ENCODE measurements at regions of chr19 and their contacts with region 1.

Region 1: GRCh38 chr19:1081251-1081921 is 13.8 kb downstream of the POLR2E start:
- DNase-seq: no peak
- H3K4me3 Mint-ChIP-seq: no peak overlapping the region
- H3K27ac Mint-ChIP-seq: peak overlapping the region; percentile 37
- H3K4me1 Mint-ChIP-seq: peaks cover 27% of the 10 kb centered on the region
- H3K27me3 Mint-ChIP-seq: no peaks in the 10 kb centered on the region

Region 2: DNA sequence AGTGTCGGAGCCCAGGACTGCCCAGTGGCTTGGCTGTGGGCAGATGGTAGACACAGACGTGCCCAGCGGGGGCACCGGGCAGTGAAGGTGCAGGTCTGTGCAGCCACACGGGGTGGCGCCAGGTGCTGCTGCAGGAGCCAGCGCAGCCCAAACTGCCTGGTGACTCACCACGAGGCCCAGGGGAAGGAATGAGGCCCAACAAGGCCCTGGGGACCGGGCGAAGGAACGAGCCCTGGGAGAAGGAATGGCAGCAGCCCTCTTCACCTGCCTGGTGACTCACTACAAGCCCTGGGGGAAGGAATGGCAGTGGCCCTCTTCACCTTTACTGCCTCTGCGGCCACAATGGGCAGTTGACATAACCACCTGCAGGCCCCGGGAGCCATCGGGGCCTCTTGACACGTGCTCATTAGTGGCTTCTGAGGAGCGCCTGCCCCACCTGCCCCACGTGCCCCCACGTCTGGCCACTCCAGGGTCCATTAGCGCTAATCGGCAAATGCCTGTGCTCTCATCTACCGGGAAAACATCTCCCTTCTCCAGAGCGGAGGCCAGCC is 197.7 kb before region 1 on chr19:
- intact Hi-C with region 1: no loop called
- DNase-seq: no peak
- H3K4me3 Mint-ChIP-seq: no peak overlapping the region
- H3K27ac Mint-ChIP-seq: no peak overlapping the region
- H3K4me1 Mint-ChIP-seq: no peaks in the 10 kb centered on the region
- H3K27me3 Mint-ChIP-seq: no peaks in the 10 kb centered on the region

Region 3: DNA sequence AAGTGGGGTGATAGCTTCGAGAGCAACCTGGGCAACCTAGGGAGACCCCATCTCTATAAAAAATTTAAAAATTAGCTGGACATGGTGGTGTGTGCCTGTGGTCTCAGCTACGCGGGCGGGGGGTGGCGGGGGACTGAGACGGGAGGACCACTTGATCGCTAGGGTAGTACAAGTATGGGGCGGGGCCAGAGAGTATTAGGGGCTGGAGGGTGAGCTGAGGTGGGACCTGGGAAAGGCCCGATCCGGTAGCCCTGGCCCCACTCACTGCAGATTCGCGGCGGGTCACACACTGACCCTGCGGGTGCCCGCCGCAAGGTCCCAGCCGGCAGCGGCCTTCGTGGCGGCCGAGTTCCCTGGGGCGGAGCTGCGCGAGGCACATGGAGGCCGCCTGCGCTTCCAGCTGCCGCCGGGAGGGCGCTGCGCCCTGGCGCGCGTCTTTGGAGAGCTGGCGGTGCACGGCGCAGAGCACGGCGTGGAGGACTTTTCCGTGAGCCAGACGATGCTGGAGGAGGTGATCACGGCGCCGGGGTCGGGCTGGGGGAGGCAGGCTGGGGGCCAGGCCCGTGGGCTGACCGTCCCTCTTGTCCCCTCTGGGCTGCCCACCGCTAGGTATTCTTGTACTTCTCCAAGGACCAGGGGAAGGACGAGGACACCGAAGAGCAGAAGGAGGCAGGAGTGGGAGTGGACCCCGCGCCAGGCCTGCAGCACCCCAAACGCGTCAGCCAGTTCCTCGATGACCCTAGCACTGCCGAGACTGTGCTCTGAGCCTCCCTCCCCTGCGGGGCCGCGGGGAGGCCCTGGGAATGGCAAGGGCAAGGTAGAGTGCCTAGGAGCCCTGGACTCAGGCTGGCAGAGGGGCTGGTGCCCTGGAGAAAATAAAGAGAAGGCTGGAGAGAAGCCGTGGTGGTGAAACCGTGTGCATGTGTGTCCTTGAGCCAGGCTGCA is 16.5 kb before region 1 on chr19:
- intact Hi-C with region 1: loop called (anchors 1 kb)
- DNase-seq: peak; percentile 94
- H3K4me3 Mint-ChIP-seq: peak overlapping the region; percentile 48
- H3K27ac Mint-ChIP-seq: peak overlapping the region; percentile 44
- H3K4me1 Mint-ChIP-seq: peaks cover 29% of the 10 kb centered on the region
- H3K27me3 Mint-ChIP-seq: no peaks in the 10 kb centered on the region

Measured in activated CD4-positive, alpha-beta T cell treated with anti-CD3 and anti-CD28 coated beads, Interleukin-2, amount 10 ng/mL, durations not matched to agents 24 days and 14 days (primary cell).